ENCODE measurements at regions of chr2 and their contacts with region 1.

Region 1: DNA sequence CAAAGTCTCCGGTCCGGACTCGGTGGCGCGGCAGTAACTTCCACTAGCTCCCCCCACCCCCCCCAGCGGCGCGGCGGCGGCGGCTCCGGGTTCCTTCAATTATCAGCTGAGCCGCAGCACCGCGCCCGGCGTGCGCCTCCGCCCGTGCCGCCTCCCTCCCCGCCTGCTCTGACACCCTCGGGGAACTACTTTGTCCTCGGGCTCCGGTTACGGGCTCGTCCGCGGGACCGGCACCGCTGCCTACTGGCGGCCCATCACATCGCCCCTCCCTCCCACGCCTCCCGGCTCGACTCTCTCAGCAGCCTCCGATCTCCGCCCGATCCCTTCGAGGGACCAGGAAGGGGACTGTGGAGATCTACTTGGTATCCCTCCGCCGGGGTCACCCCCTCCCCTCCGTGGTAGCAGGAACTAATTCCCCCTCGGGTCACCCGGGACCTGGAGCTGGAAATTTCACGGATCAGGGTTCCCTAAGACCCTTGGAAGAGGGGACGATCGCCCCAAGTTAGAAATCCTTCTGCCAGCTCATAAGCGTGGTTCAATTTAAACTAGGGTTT is at the start of gene TRIP12:
- DNase-seq: peak; percentile 83
- H3K4me3 Mint-ChIP-seq: peak within 1 kb of the TSS; percentile 97
- H3K27ac Mint-ChIP-seq: peak within 1 kb of the TSS; percentile 96
- H3K4me1 Mint-ChIP-seq: peaks cover 40% of the 10 kb centered on the region
- H3K27me3 Mint-ChIP-seq: no peaks in the 10 kb centered on the region
- total RNA-seq, gene TRIP12: 244 and 253 TPM in 2 replicates

Region 2: DNA sequence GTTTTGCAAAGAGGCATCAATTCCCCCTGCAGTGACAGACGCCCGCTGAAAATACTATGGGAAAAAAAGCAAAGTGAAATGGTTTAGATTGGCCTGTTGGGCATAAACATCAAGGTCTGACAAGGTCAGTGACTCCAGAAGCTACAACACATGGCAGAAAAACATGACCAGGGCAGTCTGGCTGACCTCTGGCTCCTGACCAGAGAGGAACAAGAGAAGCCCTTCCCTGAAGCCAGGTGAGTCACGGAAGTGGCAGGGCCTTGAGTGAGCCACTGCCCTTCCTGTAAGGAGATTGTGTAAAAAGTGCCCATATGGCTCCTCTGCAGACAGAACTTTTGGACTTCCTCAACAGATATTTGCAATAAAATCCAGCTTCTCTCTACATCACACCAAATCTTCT is 279.6 kb before region 1 on chr2:
- intact Hi-C with region 1: no loop called
- DNase-seq: no peak
- H3K4me3 Mint-ChIP-seq: no peak overlapping the region
- H3K27ac Mint-ChIP-seq: no peak overlapping the region
- H3K4me1 Mint-ChIP-seq: no peaks in the 10 kb centered on the region
- H3K27me3 Mint-ChIP-seq: peaks cover 2% of the 10 kb centered on the region

Region 3: GRCh38 chr2:229800997-229801754 is 120.8 kb before region 1 on chr2:
- intact Hi-C with region 1: loop called (anchors 1 kb)
- DNase-seq: peak; percentile 50
- H3K4me3 Mint-ChIP-seq: no peak overlapping the region
- H3K27ac Mint-ChIP-seq: no peak overlapping the region
- H3K4me1 Mint-ChIP-seq: no peaks in the 10 kb centered on the region
- H3K27me3 Mint-ChIP-seq: no peaks in the 10 kb centered on the region

Region 4: GRCh38 chr2:229910832-229911412 is 11.0 kb before region 1 on chr2:
- intact Hi-C with region 1: loop called (anchors 1 kb)
- DNase-seq: no peak
- H3K4me3 Mint-ChIP-seq: peak overlapping the region; percentile 6
- H3K27ac Mint-ChIP-seq: peak overlapping the region; percentile 75
- H3K4me1 Mint-ChIP-seq: peaks cover 39% of the 10 kb centered on the region
- H3K27me3 Mint-ChIP-seq: no peaks in the 10 kb centered on the region

Region 5: DNA sequence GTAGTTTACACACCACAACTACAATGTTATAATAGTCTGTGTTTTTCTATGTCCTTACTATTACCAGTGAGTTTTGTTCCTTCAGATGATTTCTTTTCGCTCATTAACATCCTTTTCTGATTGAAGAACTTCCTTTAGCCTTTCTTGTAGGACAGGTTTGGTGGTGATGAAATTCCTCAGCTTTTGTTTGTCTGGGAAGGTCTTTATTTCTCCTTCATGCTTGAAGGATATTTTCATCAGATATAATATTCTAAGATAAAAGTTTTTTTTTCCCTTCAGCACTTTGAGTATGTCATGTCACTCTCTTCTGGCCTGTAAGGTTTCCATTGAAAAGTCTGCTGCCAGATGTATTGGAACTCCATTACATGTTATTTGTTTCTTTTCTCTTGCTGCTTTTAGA is 184.8 kb after region 1 on chr2:
- intact Hi-C with region 1: no loop called
- DNase-seq: no peak
- H3K4me3 Mint-ChIP-seq: no peak overlapping the region
- H3K27ac Mint-ChIP-seq: no peak overlapping the region
- H3K4me1 Mint-ChIP-seq: no peaks in the 10 kb centered on the region
- H3K27me3 Mint-ChIP-seq: peaks cover 17% of the 10 kb centered on the region

Region 6: DNA sequence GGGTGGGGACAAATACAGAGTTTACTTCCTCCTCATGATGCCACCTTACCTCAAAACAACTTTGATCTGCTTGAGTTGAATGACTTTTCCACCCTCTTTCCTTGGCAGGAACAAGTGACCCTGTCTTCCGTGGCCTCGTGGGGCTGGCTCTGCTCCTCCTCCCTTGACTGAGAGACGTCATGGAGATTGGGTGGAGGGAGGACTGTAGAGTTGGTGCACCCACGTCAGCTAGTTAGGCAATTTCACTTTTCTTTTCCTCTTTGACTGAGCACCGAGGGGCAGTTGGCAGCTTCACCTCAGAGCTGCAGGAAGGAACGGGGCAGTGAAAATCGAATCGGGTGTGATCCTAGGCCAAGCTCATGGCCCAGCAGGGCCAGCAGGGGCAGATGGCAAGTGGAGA is 303.5 kb after region 1 on chr2 and contains the start of gene SP140:
- intact Hi-C with region 1: loop called (anchors 5 kb)
- DNase-seq: peak; percentile 80
- H3K4me3 Mint-ChIP-seq: peak within 1 kb of the TSS; percentile 91
- H3K27ac Mint-ChIP-seq: peak within 1 kb of the TSS; percentile 98
- H3K4me1 Mint-ChIP-seq: peaks cover 63% of the 10 kb centered on the region
- H3K27me3 Mint-ChIP-seq: no peaks in the 10 kb centered on the region
- total RNA-seq, gene SP140: 235 and 243 TPM in 2 replicates

Region 7: DNA sequence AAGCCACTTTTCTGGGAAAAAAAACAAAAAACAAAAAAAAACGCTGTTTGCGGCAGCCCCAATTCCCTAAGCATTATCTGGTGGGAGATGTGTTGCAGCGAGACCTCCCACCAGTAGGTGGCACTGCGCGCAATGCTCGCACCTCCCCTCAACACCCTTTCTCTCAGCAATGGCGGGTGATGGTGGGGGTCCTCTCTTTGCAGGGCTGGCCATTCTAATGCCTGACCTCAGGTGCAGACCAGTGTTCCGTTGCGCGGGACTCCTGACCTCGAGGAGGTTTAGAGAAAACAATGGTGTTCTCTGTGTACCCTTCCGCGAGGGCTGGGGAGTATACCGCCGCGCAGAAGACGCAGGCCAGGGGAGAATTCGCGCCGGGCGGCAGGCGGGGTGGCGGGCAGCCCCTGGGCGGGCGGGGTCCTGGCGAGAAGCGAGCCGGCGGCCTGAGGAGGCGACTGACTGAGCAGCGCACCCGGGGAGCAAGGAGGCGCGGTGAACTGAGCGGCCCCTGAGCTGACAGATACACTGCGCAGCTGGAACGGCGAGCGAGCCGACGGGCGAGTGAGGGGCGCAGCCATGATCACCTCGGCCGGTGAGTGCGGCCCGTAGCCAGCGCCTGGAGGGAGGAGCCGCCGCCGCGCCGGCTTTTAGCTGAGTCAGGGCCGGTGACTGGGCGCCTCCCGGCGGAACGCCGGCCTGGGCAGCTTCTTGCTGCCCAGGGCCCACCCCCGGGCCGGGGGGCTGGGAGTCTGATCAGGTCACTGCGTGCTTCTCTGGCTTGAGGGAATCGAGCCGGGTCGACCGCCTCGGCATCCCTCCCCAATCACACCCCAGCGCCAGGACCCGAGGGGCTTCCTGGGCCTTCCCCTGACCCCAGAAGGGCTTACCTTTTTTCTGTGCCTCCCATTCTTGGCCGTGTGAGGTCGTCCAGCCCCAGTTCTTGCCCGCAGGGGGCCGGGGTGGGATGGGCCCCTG is 1134.8 kb after region 1 on chr2 and contains the start of gene PSMD1:
- intact Hi-C with region 1: loop called (anchors 2 kb)
- DNase-seq: peak; percentile 89
- H3K4me3 Mint-ChIP-seq: peak within 1 kb of the TSS; percentile 98
- H3K27ac Mint-ChIP-seq: peak within 1 kb of the TSS; percentile 100
- H3K4me1 Mint-ChIP-seq: peaks cover 52% of the 10 kb centered on the region
- H3K27me3 Mint-ChIP-seq: no peaks in the 10 kb centered on the region
- total RNA-seq, gene PSMD1: 172 and 181 TPM in 2 replicates